Activated CD8-positive, alpha-beta T cell treated with anti-CD3 and anti-CD28 coated beads for 36 hours (primary cell): ENCODE measurements at regions of chr21 and their contacts with region 1.

Region 1: GRCh38 chr21:46458315-46459023 is at the start of gene DIP2A:
- DNase-seq: peak; percentile 93
- ATAC-seq: peak; percentile 98
- H3K4me3 Mint-ChIP-seq: peak within 1 kb of the TSS; percentile 94
- H3K27ac Mint-ChIP-seq: peak within 1 kb of the TSS; percentile 95
- H3K4me1 Mint-ChIP-seq: peaks cover 31% of the 10 kb centered on the region
- H3K27me3 Mint-ChIP-seq: no peaks in the 10 kb centered on the region
- CTCF ChIP-seq: no peak
- total RNA-seq, gene DIP2A: 30.9 to 34.1 TPM

Region 2: DNA sequence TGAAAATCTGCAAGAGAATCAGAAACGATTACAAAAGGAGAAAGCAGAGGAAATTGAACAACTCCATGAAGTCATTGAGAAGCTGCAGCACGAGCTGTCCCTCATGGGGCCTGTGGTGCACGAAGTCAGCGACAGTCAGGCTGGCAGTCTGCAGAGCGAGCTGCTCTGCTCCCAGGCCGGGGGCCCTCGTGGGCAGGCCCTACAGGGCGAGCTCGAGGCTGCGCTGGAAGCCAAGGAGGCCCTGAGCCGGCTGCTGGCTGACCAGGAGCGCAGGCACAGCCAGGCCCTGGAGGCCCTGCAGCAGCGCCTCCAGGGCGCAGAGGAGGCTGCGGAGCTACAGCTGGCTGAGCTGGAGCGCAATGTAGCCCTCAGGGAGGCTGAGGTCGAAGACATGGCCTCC is 47.2 kb before region 1 on chr21:
- CTCF ChIA-PET with region 1: no interaction called
- POLR2A ChIA-PET with region 1: no interaction called
- intact Hi-C with region 1: no loop called
- DNase-seq: no peak
- ATAC-seq: no peak
- H3K4me3 Mint-ChIP-seq: no peak overlapping the region
- H3K27ac Mint-ChIP-seq: no peak overlapping the region
- H3K4me1 Mint-ChIP-seq: no peaks in the 10 kb centered on the region
- H3K27me3 Mint-ChIP-seq: no peaks in the 10 kb centered on the region
- CTCF ChIP-seq: no peak

Region 3: DNA sequence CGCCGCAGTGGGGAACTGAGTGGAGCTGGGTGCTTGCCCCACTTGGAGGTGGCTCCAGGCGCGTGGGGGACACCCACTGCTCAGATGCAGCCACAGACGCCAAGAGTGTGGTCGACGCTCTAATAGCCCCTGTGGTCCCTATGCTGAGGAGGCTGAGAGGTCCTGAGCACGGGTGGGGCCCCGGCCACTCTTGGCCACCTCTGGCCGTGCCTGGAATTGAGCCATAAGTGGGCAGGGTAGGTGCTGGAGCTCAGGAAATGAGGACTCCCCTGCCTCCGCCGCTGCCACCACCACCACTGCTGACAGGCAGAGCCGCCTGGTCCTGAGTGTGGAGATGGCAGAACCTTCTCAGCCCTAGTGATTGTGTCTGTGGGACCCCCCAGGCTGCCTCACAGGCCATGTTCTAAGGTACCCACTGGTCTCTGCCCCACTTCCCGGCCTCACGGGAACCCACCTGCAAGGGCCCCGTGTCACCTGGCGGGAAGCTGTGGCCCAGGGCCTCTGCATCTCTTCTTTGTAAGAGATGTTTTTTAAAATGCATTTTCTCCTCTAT is 34.4 kb before region 1 on chr21:
- CTCF ChIA-PET with region 1: interaction called, 3 read pairs
- POLR2A ChIA-PET with region 1: interaction called, 12 read pairs
- intact Hi-C with region 1: no loop called
- DNase-seq: peak; percentile 52
- ATAC-seq: peak; percentile 38
- H3K4me3 Mint-ChIP-seq: no peak overlapping the region
- H3K27ac Mint-ChIP-seq: peak overlapping the region; percentile 96
- H3K4me1 Mint-ChIP-seq: peaks cover 22% of the 10 kb centered on the region
- H3K27me3 Mint-ChIP-seq: no peaks in the 10 kb centered on the region
- CTCF ChIP-seq: no peak

Region 4: DNA sequence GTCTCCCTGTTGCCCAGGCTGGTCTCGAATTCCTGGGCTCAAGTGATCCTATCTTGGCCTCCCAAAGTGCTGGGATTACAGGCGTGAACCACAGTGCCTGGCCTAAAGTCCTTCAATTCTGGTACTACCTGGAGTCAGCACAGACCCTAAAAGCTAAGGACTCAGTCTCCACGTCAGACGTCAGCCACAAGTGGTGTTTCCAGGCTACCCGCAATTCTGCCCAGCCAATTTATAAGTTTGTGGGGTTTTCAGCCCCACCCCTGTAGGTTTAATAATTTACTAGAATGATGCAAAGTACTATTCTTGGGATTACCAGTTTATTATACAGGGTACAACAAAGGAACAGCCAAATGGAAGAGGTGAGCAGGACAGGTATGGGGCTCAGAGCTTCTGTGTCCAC is 10.4 kb before region 1 on chr21:
- CTCF ChIA-PET with region 1: no interaction called
- POLR2A ChIA-PET with region 1: interaction called, 13 read pairs
- intact Hi-C with region 1: no loop called
- DNase-seq: no peak
- ATAC-seq: no peak
- H3K4me3 Mint-ChIP-seq: no peak overlapping the region
- H3K27ac Mint-ChIP-seq: no peak overlapping the region
- H3K4me1 Mint-ChIP-seq: peaks cover 10% of the 10 kb centered on the region
- H3K27me3 Mint-ChIP-seq: no peaks in the 10 kb centered on the region
- CTCF ChIP-seq: no peak

Region 5: GRCh38 chr21:46551636-46552241 is 93.3 kb after region 1 on chr21:
- CTCF ChIA-PET with region 1: interaction called, 3 read pairs
- POLR2A ChIA-PET with region 1: interaction called, 17 read pairs
- intact Hi-C with region 1: no loop called
- DNase-seq: peak; percentile 67
- ATAC-seq: peak; percentile 76
- H3K4me3 Mint-ChIP-seq: peak overlapping the region; percentile 66
- H3K27ac Mint-ChIP-seq: peak overlapping the region; percentile 87
- H3K4me1 Mint-ChIP-seq: peaks cover 60% of the 10 kb centered on the region
- H3K27me3 Mint-ChIP-seq: no peaks in the 10 kb centered on the region
- CTCF ChIP-seq: peak; percentile 8